Activated CD8-positive, alpha-beta T cell treated with anti-CD3 and anti-CD28 coated beads for 36 hours (primary cell): ENCODE measurements at regions of chr6 and their contacts with region 1.

Region 1: GRCh38 chr6:87825821-87826221 is 123.8 kb upstream of the AKIRIN2 start:
- DNase-seq: no peak
- ATAC-seq: peak; percentile 45
- H3K4me3 Mint-ChIP-seq: no peak overlapping the region
- H3K27ac Mint-ChIP-seq: no peak overlapping the region
- H3K4me1 Mint-ChIP-seq: peaks cover 7% of the 10 kb centered on the region
- H3K27me3 Mint-ChIP-seq: peaks cover 5% of the 10 kb centered on the region
- CTCF ChIP-seq: no peak

Region 2: DNA sequence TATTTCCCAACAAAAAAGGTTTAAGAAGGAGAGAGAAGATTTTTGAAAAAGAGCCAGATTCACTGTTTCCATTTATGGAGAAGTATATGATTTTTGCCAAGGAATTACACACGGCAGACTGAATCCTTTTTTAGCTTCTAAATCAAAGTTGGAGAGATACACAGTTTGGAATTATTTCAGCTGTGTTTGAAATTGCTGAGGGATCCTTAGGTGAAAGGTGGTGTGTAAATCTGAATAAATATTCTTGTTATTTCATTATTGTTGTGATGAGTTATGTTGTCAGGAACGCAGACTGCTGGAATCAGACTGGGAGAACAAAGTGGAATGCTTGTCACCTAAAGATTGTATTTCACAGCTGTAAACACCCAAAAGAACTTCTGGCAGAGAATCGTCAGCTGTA is 44.7 kb after region 1 on chr6:
- CTCF ChIA-PET with region 1: no interaction called
- POLR2A ChIA-PET with region 1: no interaction called
- intact Hi-C with region 1: loop called (anchors 2 kb)
- DNase-seq: no peak
- ATAC-seq: no peak
- H3K4me3 Mint-ChIP-seq: no peak overlapping the region
- H3K27ac Mint-ChIP-seq: no peak overlapping the region
- H3K4me1 Mint-ChIP-seq: no peaks in the 10 kb centered on the region
- H3K27me3 Mint-ChIP-seq: peaks cover 7% of the 10 kb centered on the region
- CTCF ChIP-seq: no peak